Sciatic nerve (tissue), 2 donors: ENCODE measurements at regions of chrX and their contacts with region 1.

Region 1: GRCh38 chrX:12949927-12950656 is 24.8 kb upstream of the TMSB4X start:
- DNase-seq: peak; percentile 88
- ATAC-seq: peak; percentile 96

Region 2: DNA sequence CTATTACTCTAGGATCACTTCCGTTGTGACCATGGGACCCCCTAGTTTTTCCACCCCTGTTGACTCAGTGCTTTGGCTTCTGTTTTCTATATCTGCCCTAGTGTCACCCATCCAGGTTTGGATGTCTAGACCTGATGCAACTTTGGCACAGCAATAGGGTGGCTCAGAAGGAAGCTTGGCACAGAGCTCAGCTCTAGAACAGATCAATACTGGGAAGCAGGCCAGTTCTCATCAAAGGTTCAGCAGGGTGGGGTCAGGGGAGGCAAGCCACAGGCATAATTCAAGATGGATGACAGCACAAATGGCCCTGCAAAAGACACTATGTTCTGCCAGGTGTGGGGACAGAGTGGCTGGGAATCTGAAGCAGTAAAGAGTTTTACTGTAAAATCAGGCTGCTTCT is 545.1 kb after region 1 on chrX:
- intact Hi-C with region 1: loop called (anchors 10 kb)
- DNase-seq: no peak
- ATAC-seq: no peak